CD4-positive, alpha-beta memory T cell (primary cell): ENCODE measurements at regions of chr2 and their contacts with region 1.

Region 1: DNA sequence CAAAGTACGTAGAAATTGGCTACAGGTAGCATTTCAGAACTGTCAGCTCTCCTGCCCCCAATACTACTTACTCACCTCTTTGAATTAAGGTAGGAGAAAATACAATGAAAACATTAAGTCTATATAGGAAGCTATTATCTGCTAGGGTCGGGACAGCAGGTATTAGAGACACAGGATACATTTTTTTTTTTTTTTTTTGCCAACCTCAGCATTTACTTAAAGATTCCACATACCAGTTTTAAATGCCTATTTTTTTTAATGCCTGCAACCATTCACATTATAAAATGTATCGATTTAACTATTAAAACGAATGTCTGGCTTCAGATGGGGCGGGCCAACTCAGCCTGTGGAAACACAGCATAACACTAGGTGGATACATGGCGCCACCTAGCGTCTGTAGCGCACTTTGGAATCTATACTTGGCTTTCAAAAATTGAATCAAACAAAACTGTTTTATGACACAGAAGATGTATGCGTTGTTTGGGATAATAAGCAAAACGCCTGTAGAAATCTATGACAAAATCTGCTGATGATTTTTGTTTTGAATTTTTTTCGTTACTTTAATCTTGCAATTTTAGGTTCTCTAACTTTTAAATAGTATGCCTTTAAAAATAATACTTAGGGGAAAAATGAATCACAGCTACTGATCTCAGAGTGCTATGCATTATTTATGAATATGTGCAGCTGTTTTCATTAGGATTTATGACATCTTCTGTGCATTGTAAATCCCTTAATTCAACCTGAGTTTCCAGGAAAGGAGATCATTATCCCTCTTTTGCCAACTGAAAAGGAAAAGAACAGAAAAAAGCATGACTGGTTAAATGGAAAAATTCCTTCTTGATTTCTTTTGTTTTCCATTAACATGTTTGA is 261.0 kb downstream of the NYAP2 start:
- DNase-seq: peak; percentile 51 to 63 (median 61)
- H3K4me3 ChIP-seq: no peak overlapping the region
- H3K4me3 Mint-ChIP-seq: no peak overlapping the region
- H3K27ac ChIP-seq: no peak overlapping the region
- H3K27ac Mint-ChIP-seq: no peak overlapping the region
- H3K4me1 ChIP-seq: no peaks in the 10 kb centered on the region
- H3K4me1 Mint-ChIP-seq: peaks cover 0 to 2% (median under 1%) of the 10 kb centered on the region in 4 donors
- H3K27me3 ChIP-seq: no peaks in the 10 kb centered on the region
- H3K27me3 Mint-ChIP-seq: peaks cover 10 to 15% of the 10 kb centered on the region in 2 donors

Region 2: GRCh38 chr2:225025917-225026571 is 634.5 kb before region 1 on chr2:
- CTCF ChIA-PET with region 1: no interaction called
- POLR2A ChIA-PET with region 1: no interaction called
- intact Hi-C with region 1: no loop called
- DNase-seq: peak in 3 of 5 donors; percentile 22 to 55 (median 30)
- H3K4me3 ChIP-seq: no peak overlapping the region
- H3K4me3 Mint-ChIP-seq: peak overlapping the region; percentile 32 to 70 (median 39)
- H3K27ac ChIP-seq: no peak overlapping the region
- H3K27ac Mint-ChIP-seq: peak overlapping the region; percentile 13 to 86 (median 53)
- H3K4me1 ChIP-seq: peaks cover 94% of the 10 kb centered on the region
- H3K4me1 Mint-ChIP-seq: peaks cover 59 to 84% (median 73%) of the 10 kb centered on the region in 4 donors
- H3K27me3 ChIP-seq: no peaks in the 10 kb centered on the region
- H3K27me3 Mint-ChIP-seq: no peaks in the 10 kb centered on the region

Region 3: GRCh38 chr2:225282858-225283710 is 377.4 kb before region 1 on chr2:
- CTCF ChIA-PET with region 1: interaction called, 32 read pairs
- POLR2A ChIA-PET with region 1: no interaction called
- intact Hi-C with region 1: no loop called
- DNase-seq: peak in 4 of 5 donors; percentile 13 to 37 (median 18)
- H3K4me3 ChIP-seq: no peak overlapping the region
- H3K4me3 Mint-ChIP-seq: no peak overlapping the region
- H3K27ac ChIP-seq: no peak overlapping the region
- H3K27ac Mint-ChIP-seq: no peak overlapping the region
- H3K4me1 ChIP-seq: no peaks in the 10 kb centered on the region
- H3K4me1 Mint-ChIP-seq: no peaks in the 10 kb centered on the region
- H3K27me3 ChIP-seq: no peaks in the 10 kb centered on the region
- H3K27me3 Mint-ChIP-seq: no peaks in the 10 kb centered on the region

Region 4: GRCh38 chr2:225649274-225649673 is 11.2 kb before region 1 on chr2:
- CTCF ChIA-PET with region 1: interaction called, 16 read pairs
- POLR2A ChIA-PET with region 1: no interaction called
- intact Hi-C with region 1: no loop called
- DNase-seq: no peak
- H3K4me3 ChIP-seq: no peak overlapping the region
- H3K4me3 Mint-ChIP-seq: no peak overlapping the region
- H3K27ac ChIP-seq: no peak overlapping the region
- H3K27ac Mint-ChIP-seq: no peak overlapping the region
- H3K4me1 ChIP-seq: no peaks in the 10 kb centered on the region
- H3K4me1 Mint-ChIP-seq: no peaks in the 10 kb centered on the region
- H3K27me3 ChIP-seq: no peaks in the 10 kb centered on the region
- H3K27me3 Mint-ChIP-seq: peaks cover 2 to 12% of the 10 kb centered on the region in 2 donors